A549 (cell line): ENCODE measurements at regions of chr12 and their contacts with region 1.

Region 1: DNA sequence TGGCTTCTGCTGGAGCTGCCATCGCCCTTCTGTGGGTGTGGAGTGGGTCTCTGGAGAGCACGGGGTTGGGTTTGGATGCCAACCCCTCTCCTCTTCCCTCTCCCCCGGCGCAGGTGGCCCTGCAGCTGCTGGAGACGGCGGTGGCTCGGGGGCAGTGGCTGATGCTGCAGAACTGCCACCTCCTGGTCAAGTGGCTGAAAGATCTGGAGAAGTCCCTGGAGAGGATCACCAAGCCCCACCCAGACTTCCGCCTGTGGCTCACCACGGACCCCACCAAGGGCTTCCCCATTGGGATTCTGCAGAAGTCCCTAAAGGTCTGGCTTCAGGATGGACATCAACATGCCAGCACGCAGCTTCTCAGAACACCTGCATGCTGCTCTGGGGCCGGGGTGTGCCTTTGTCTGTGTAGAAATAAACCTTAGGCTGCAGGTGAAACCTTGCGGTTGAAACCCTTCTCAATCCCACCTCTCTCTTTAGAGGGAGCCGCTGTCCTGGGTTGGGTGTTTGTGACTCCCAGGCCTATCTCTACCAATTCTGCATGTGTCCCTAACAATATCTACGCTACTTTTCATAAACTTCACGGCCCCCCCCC is 44.3 kb downstream of the CCDC92 start:
- DNase-seq: no peak
- ATAC-seq: peak in 1 of 2 experiments; percentile 25; a peak in 3 of 6 replicates
- H3K4me3 ChIP-seq: no peak overlapping the region
- H3K27ac ChIP-seq: no peak overlapping the region
- H3K4me1 ChIP-seq: no peaks in the 10 kb centered on the region
- CTCF ChIP-seq: no peak
- EP300 ChIP-seq: no peak
- POLR2A ChIP-seq: no peak
- RAD21 ChIP-seq: no peak

Region 2: DNA sequence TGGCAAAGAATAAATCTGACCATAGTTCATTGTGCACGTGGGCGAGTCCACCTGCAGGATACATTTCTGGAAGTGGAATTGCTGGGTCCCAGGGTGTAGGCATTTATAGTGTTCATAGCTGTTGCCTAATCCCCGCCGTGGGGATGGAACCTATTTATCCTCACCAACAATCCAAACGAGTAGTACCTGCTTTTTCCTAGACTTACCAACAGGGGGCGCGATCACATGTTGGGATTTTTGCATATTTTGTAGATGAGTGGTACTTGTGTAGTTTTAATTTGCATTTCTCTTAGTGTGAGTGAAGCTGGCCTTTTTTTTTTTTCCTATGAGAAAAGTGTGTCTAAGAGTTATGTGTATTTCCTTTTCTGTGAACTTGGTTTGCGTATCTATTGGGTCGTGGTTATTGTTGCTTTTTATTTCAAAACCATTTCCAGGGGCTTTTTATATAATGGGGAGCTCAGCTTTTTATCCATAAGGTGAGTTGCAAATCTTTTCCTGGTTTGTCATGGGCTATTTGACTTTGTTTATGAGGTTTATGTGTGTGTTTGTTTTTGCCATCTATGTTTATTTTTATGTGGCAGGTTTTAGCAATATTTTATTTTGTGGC is 22.9 kb before region 1 on chr12:
- CTCF ChIA-PET with region 1: interaction called, 12 read pairs
- POLR2A ChIA-PET with region 1: no interaction called
- DNase-seq: peak; percentile 61 to 79
- ATAC-seq: peak; percentile 20 to 60; a peak in 3 of 6 replicates
- H3K4me3 ChIP-seq: no peak overlapping the region
- H3K27ac ChIP-seq: no peak overlapping the region
- H3K4me1 ChIP-seq: no peaks in the 10 kb centered on the region
- CTCF ChIP-seq: peak; percentile 79
- EP300 ChIP-seq: no peak
- POLR2A ChIP-seq: no peak
- RAD21 ChIP-seq: peak; percentile 36 to 51; a peak in 4 of 5 replicates

Region 3: GRCh38 chr12:124640056-124640455 is 711.7 kb after region 1 on chr12:
- CTCF ChIA-PET with region 1: no interaction called
- POLR2A ChIA-PET with region 1: interaction called, 11 read pairs
- DNase-seq: peak in 1 of 2 experiments; percentile 39
- ATAC-seq: peak in 1 of 2 experiments; percentile 28; a peak in 2 of 6 replicates
- H3K4me3 ChIP-seq: no peak overlapping the region
- H3K27ac ChIP-seq: peak overlapping the region in 1 of 2 experiments; percentile 71; a peak in 2 of 6 replicates
- H3K4me1 ChIP-seq: peaks cover 30% of the 10 kb centered on the region
- CTCF ChIP-seq: no peak
- EP300 ChIP-seq: no peak
- POLR2A ChIP-seq: no peak
- RAD21 ChIP-seq: no peak

Region 4: DNA sequence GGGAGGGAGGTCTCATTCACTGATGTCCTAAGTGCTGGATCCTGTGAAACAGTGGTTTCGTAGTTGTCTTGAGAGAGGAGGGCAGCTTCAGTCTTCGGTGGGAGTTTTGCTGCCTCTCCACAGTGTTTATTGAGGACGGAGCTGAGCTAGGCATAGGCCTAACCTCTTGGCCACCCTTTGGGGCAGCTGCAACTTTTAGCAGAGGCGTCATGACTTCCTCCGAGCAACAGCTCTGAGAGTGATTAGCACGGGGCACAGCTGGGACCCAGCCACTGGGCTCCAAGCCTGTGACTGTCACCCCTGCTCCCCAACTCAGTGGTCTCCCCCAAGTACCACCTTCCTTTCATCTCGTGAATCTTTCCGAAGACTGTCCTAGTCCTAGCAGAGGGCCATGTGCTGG is 778.9 kb after region 1 on chr12:
- CTCF ChIA-PET with region 1: no interaction called
- POLR2A ChIA-PET with region 1: interaction called, 10 read pairs
- DNase-seq: no peak
- ATAC-seq: no peak
- H3K4me3 ChIP-seq: no peak overlapping the region
- H3K27ac ChIP-seq: no peak overlapping the region
- H3K4me1 ChIP-seq: no peaks in the 10 kb centered on the region
- CTCF ChIP-seq: no peak
- EP300 ChIP-seq: no peak
- POLR2A ChIP-seq: no peak
- RAD21 ChIP-seq: no peak